Activated CD4-positive, alpha-beta memory T cell treated with anti-CD3 and anti-CD28 coated beads, Interleukin-2, amount 10 ng/mL, durations not matched to agents 7 days and 5 days (primary cell): ENCODE measurements at regions of chr6 and their contacts with region 1.

Region 1: GRCh38 chr6:138428944-138429598 is 25.0 kb downstream of the HEBP2 start:
- DNase-seq: no peak
- H3K4me3 Mint-ChIP-seq: no peak overlapping the region
- H3K27ac Mint-ChIP-seq: no peak overlapping the region
- H3K4me1 Mint-ChIP-seq: no peaks in the 10 kb centered on the region
- H3K27me3 Mint-ChIP-seq: peaks cover 2% of the 10 kb centered on the region

Region 2: GRCh38 chr6:138455746-138456400 is 26.8 kb after region 1 on chr6:
- CTCF ChIA-PET with region 1: interaction called, 18 read pairs
- POLR2A ChIA-PET with region 1: interaction called, 4 read pairs
- DNase-seq: peak; percentile 46
- H3K4me3 Mint-ChIP-seq: peak overlapping the region; percentile 58
- H3K27ac Mint-ChIP-seq: peak overlapping the region; percentile 89
- H3K4me1 Mint-ChIP-seq: peaks cover 33% of the 10 kb centered on the region
- H3K27me3 Mint-ChIP-seq: no peaks in the 10 kb centered on the region

Region 3: GRCh38 chr6:138509371-138509770 is 80.3 kb after region 1 on chr6:
- CTCF ChIA-PET with region 1: interaction called, 91 read pairs
- POLR2A ChIA-PET with region 1: interaction called, 3 read pairs
- DNase-seq: peak; percentile 59
- H3K4me3 Mint-ChIP-seq: no peak overlapping the region
- H3K27ac Mint-ChIP-seq: no peak overlapping the region
- H3K4me1 Mint-ChIP-seq: peaks cover 2% of the 10 kb centered on the region
- H3K27me3 Mint-ChIP-seq: peaks cover 9% of the 10 kb centered on the region

Region 4: DNA sequence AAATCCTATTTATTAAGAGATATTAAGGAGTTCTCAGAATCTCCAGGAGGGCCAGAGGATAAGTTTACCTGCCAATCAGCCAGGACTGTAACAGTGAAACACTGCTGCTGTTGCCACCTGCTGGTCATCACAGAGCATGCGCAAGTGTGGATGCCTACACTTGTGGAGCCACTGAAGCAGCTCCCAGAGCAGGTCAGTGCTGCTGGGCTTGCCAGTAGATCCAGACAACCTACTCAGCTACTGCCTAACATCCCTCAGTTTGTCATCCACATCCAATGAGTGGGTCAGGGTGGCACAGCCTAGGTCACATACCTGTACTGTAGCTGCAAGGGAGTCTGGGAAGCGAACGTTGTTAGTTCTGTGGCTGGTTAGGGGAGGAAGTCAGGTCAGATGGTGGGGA is 88.6 kb after region 1 on chr6:
- CTCF ChIA-PET with region 1: interaction called, 91 read pairs
- POLR2A ChIA-PET with region 1: no interaction called
- DNase-seq: peak; percentile 67
- H3K4me3 Mint-ChIP-seq: no peak overlapping the region
- H3K27ac Mint-ChIP-seq: no peak overlapping the region
- H3K4me1 Mint-ChIP-seq: peaks cover 31% of the 10 kb centered on the region
- H3K27me3 Mint-ChIP-seq: peaks cover 4% of the 10 kb centered on the region